ENCODE measurements at regions of chr11 and their contacts with region 1.

Region 1: DNA sequence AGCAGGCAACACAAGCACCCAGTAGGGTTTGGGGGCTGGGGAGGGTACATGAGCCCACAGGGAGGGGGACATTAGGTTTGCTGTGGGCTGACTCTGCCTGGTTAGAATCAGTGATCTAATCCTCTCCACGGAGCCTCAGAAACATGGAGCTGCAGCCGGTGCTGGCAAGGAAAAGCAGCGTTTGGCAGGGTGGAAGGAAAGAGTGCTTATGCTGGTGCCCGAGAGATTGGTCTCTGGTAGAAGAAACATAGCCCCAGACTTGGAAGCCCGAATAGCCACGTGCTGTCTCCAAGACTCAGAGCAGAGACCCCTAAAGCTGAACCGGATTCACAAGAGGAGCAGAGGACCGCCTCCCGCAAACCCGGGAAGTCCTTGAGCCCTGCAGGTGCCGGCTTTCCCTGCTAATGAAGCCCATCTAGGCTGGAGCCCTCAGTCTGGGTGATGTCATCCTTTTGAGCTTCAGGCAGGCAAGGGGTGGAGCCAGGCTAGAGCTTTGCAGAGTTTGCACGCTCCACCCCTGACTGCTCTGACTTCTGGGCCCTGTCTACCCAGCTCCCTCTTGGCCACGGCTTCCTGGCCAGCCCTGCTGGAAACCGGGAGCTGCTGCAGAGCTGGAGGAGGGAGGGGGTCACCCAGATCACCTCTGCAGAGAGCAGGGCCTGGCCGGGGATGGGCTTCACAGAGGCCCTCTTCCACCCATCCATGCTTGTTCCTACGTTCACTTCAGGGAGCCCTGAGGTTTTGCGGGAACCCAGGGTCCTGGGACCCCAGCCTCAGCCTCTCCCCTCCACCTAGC is 35.0 kb upstream of the JAM3 start:
- DNase-seq: peak; percentile 75
- H3K4me3 ChIP-seq: no peak overlapping the region
- H3K27ac ChIP-seq: no peak overlapping the region
- H3K4me1 ChIP-seq: peaks cover 11% of the 10 kb centered on the region
- H3K27me3 ChIP-seq: peaks cover 0 to 3% of the 10 kb centered on the region in 2 experiments
- CTCF ChIP-seq: no peak
- POLR2A ChIP-seq: no peak

Region 2: DNA sequence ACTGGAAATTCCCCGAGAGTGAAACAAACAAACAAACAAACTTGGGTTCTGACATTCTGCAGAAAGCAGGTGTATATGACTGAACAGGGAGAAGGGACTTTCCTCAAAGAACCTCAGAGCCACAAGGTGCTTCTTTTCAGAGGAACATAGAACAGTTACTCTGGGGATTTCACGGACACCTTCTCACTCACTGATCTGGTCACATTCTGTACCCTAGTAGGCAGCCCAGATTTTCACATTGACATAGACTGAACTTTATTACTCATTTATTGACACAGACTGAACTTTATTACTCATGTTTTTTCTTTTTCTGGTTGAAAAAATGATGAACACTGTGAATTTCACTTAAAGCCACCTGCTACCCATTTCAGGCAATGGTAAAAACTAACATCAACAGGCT is 764.6 kb before region 1 on chr11:
- CTCF ChIA-PET with region 1: no interaction called
- POLR2A ChIA-PET with region 1: no interaction called
- dilution Hi-C with region 1: no loop called
- intact Hi-C with region 1: no loop called
- DNase-seq: no peak
- H3K4me3 ChIP-seq: no peak overlapping the region
- H3K27ac ChIP-seq: no peak overlapping the region
- H3K4me1 ChIP-seq: no peaks in the 10 kb centered on the region
- H3K27me3 ChIP-seq: no peaks in the 10 kb centered on the region
- CTCF ChIP-seq: no peak
- POLR2A ChIP-seq: no peak

Region 3: GRCh38 chr11:133947321-133947756 is 86.6 kb before region 1 on chr11:
- CTCF ChIA-PET with region 1: no interaction called
- POLR2A ChIA-PET with region 1: no interaction called
- dilution Hi-C with region 1: no loop called
- intact Hi-C with region 1: loop called (anchors 5 kb)
- DNase-seq: peak; percentile 20
- H3K4me3 ChIP-seq: no peak overlapping the region
- H3K27ac ChIP-seq: no peak overlapping the region
- H3K4me1 ChIP-seq: no peaks in the 10 kb centered on the region
- H3K27me3 ChIP-seq: peaks cover 17 to 19% of the 10 kb centered on the region in 2 experiments
- CTCF ChIP-seq: peak in 1 of 2 donors; percentile 39
- POLR2A ChIP-seq: no peak

Region 4: GRCh38 chr11:134331354-134332188 is 297.7 kb after region 1 on chr11 and contains the start of gene GLB1L2:
- CTCF ChIA-PET with region 1: no interaction called
- POLR2A ChIA-PET with region 1: no interaction called
- dilution Hi-C with region 1: no loop called
- intact Hi-C with region 1: loop called (anchors 10 kb)
- DNase-seq: peak; percentile 36
- H3K4me3 ChIP-seq: peak within 1 kb of the TSS in 2 of 3 experiments; percentile 3 to 37
- H3K27ac ChIP-seq: no peak within 1 kb of the TSS
- H3K4me1 ChIP-seq: peaks cover 4% of the 10 kb centered on the region
- H3K27me3 ChIP-seq: peaks cover 16 to 17% of the 10 kb centered on the region in 2 experiments
- CTCF ChIP-seq: no peak
- POLR2A ChIP-seq: no peak
- total RNA-seq, gene GLB1L2: 0.28 and 0.55 TPM in 2 replicates